ENCODE measurements at regions of chr6 and their contacts with region 1.

Region 1: GRCh38 chr6:138987640-138988468 is at the start of gene REPS1:
- DNase-seq: peak; percentile 88 to 93 (median 89)
- H3K4me3 ChIP-seq: peak within 1 kb of the TSS; percentile 51
- H3K4me3 Mint-ChIP-seq: peak within 1 kb of the TSS in 6 of 7 donors; percentile 87 to 96 (median 93)
- H3K27ac ChIP-seq: peak within 1 kb of the TSS; percentile 66
- H3K27ac Mint-ChIP-seq: peak within 1 kb of the TSS; percentile 84 to 96 (median 92)
- H3K4me1 ChIP-seq: peaks cover 38% of the 10 kb centered on the region
- H3K4me1 Mint-ChIP-seq: peaks cover 8 to 14% (median 11%) of the 10 kb centered on the region in 3 donors
- H3K27me3 ChIP-seq: no peaks in the 10 kb centered on the region
- H3K27me3 Mint-ChIP-seq: peaks cover 0 to 1% of the 10 kb centered on the region in 2 donors
- total RNA-seq, gene REPS1: 64.4 to 69.5 TPM

Region 2: DNA sequence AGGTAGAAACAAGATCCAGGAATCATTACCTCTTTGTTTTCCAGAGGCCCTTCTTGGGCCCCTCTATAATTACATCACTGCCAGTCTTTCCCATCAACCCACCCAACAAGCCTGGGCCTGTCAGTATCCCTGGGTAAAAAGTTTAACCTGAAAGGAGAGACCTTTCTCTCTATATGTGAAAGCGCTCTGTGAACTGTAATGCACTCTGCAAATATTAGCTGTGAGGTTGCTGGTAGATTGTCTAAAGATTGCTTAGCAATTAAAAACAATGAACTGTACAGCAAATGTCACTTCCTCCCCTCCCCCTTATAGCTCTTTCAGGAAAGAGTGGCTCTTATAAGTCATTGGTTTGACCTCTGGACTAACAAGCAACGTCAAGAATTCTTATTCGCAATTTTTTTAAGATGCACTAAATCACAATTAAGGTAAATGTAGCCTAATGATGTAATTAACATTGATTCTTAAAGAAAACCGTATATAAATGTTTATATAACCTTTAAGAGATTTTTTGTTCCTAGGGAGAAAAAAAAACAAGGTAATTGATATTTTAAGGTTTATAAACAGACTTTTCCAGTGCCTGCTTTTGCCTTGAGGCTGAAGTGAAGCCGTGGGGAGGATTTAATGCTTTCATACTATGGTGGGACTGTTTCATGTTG is 173.5 kb before region 1 on chr6:
- CTCF ChIA-PET with region 1: interaction called, 11 read pairs
- POLR2A ChIA-PET with region 1: no interaction called
- DNase-seq: no peak
- H3K4me3 ChIP-seq: no peak overlapping the region
- H3K4me3 Mint-ChIP-seq: no peak overlapping the region
- H3K27ac ChIP-seq: no peak overlapping the region
- H3K27ac Mint-ChIP-seq: no peak overlapping the region
- H3K4me1 ChIP-seq: no peaks in the 10 kb centered on the region
- H3K4me1 Mint-ChIP-seq: peaks cover 0 to 3% (median 0%) of the 10 kb centered on the region in 3 donors
- H3K27me3 ChIP-seq: no peaks in the 10 kb centered on the region
- H3K27me3 Mint-ChIP-seq: no peaks in the 10 kb centered on the region

Region 3: GRCh38 chr6:139016337-139017213 is 28.7 kb after region 1 on chr6:
- CTCF ChIA-PET with region 1: interaction called, 10 read pairs
- POLR2A ChIA-PET with region 1: no interaction called
- DNase-seq: no peak
- H3K4me3 ChIP-seq: no peak overlapping the region
- H3K4me3 Mint-ChIP-seq: no peak overlapping the region
- H3K27ac ChIP-seq: no peak overlapping the region
- H3K27ac Mint-ChIP-seq: no peak overlapping the region
- H3K4me1 ChIP-seq: no peaks in the 10 kb centered on the region
- H3K4me1 Mint-ChIP-seq: no peaks in the 10 kb centered on the region
- H3K27me3 ChIP-seq: no peaks in the 10 kb centered on the region
- H3K27me3 Mint-ChIP-seq: peaks cover 4 to 9% of the 10 kb centered on the region in 2 donors

Region 4: DNA sequence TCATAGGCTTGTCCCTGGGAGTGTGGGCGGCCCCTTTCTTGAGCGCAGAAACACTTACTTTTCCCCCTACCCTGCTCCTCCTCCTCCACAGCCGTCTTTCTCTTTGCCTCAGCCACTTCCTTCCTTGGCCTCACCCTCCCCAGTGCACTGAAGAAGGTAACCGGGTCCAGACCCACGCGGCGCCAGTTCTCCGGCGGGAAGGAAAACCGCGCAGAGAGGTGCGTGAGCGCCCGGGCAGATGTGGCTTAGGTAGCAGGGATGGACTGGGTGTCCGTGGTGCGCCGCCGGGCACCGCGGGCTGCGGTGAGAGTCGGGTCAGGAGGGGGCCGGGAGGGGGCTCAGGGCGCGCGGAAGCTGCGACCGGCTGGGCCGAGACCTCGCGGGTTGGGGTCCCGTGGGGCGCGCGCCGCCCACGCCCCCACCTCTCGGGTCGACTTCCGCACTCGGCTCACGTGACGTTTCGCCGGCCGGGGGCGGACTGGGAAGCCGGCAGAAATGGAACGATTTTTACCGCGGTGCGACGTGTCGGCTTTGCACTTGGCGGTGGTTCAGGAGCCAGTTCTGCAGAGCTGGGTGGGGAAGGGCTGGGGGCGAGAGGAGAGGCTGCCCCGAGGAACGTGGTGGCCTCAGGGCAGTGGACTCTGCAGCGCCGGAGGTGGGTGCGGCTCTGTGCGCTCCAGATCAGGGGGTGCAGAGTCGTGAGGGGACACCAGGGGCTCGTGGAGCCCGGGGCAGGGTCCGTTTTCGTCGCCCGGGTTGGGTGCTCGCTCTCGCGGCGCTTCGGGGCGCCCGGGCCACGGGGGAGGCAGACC is 41.0 kb after region 1 on chr6 and contains the start of gene ABRACL:
- CTCF ChIA-PET with region 1: interaction called, 12 read pairs
- POLR2A ChIA-PET with region 1: interaction called, 5 read pairs
- DNase-seq: peak; percentile 49 to 82 (median 64)
- H3K4me3 ChIP-seq: peak within 1 kb of the TSS; percentile 70
- H3K4me3 Mint-ChIP-seq: peak within 1 kb of the TSS in 2 of 7 donors; percentile 94 to 98
- H3K27ac ChIP-seq: peak within 1 kb of the TSS; percentile 71
- H3K27ac Mint-ChIP-seq: peak within 1 kb of the TSS; percentile 56 to 99 (median 90)
- H3K4me1 ChIP-seq: peaks cover 20% of the 10 kb centered on the region
- H3K4me1 Mint-ChIP-seq: peaks cover 31 to 32% (median 32%) of the 10 kb centered on the region in 3 donors
- H3K27me3 ChIP-seq: no peaks in the 10 kb centered on the region
- H3K27me3 Mint-ChIP-seq: no peaks in the 10 kb centered on the region
- total RNA-seq, gene ABRACL: 141 to 145 TPM

Region 5: GRCh38 chr6:139109558-139109957 is 121.7 kb after region 1 on chr6:
- CTCF ChIA-PET with region 1: interaction called, 10 read pairs
- POLR2A ChIA-PET with region 1: interaction called, 5 read pairs
- DNase-seq: peak in 1 of 5 donors; percentile 48
- H3K4me3 ChIP-seq: no peak overlapping the region
- H3K4me3 Mint-ChIP-seq: peak overlapping the region in 1 of 7 donors; percentile 40
- H3K27ac ChIP-seq: no peak overlapping the region
- H3K27ac Mint-ChIP-seq: peak overlapping the region in 6 of 8 donors; percentile 15 to 57 (median 32)
- H3K4me1 ChIP-seq: peaks cover 47% of the 10 kb centered on the region
- H3K4me1 Mint-ChIP-seq: peaks cover 49 to 59% (median 58%) of the 10 kb centered on the region in 3 donors
- H3K27me3 ChIP-seq: no peaks in the 10 kb centered on the region
- H3K27me3 Mint-ChIP-seq: peaks cover 0 to 3% of the 10 kb centered on the region in 2 donors

Measured in CD8-positive, alpha-beta memory T cell (primary cell).